Right cardiac atrium (tissue), 5 donors: ENCODE measurements at regions of chr18 and their contacts with region 1.

Region 1: GRCh38 chr18:60676815-60677214 is 304.2 kb upstream of the MC4R start:
- DNase-seq: no peak
- ATAC-seq: no peak
- H3K4me3 ChIP-seq: no peak overlapping the region
- H3K27ac ChIP-seq: no peak overlapping the region
- H3K4me1 ChIP-seq: no peaks in the 10 kb centered on the region
- H3K27me3 ChIP-seq: no peaks in the 10 kb centered on the region

Region 2: GRCh38 chr18:60391571-60392226 is 285.1 kb before region 1 on chr18:
- intact Hi-C with region 1: no loop called
- DNase-seq: no peak
- ATAC-seq: no peak
- H3K4me3 ChIP-seq: no peak overlapping the region
- H3K27ac ChIP-seq: no peak overlapping the region
- H3K4me1 ChIP-seq: no peaks in the 10 kb centered on the region
- H3K27me3 ChIP-seq: no peaks in the 10 kb centered on the region

Region 3: DNA sequence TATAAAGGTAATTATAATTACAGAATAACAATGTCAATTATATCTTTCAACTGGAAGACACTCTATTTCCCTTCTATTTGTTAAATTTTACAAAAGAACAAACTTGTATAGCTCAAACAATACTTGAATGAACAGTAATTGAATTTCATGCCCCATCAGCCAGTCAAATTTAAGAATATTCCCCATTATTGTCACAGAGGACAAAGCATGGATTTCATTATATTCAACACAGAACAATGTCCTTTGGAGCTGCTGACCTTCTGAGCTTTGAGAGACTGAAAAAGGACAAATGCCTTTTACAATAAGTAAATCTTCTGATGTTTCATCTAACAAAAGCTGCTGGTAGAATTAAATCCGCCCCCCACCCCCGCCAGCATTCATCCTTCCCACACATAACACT is 116.7 kb before region 1 on chr18:
- intact Hi-C with region 1: no loop called
- DNase-seq: no peak
- ATAC-seq: no peak
- H3K4me3 ChIP-seq: no peak overlapping the region
- H3K27ac ChIP-seq: no peak overlapping the region
- H3K4me1 ChIP-seq: no peaks in the 10 kb centered on the region
- H3K27me3 ChIP-seq: no peaks in the 10 kb centered on the region

Region 4: DNA sequence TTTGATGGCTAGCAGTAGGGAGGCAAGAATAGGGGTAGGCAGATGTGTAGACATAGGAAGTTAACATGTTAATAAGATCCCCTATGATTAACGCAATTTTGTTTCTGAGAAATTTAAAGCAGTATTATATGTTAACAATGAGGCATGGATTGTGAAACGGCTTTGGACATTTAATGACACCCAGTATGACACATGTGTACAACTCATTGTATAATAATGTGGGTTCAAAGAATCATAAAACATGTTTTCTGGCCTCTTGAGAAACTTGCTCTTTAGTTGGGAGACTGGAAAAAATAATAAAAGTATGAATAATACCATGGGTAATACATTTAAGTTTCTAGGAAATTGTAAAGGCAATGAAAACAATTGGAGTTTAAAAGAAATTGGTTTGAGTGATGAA is 324.3 kb after region 1 on chr18:
- intact Hi-C with region 1: loop called in 1 of 4 experiments (anchors 10 kb)
- DNase-seq: no peak
- ATAC-seq: no peak
- H3K4me3 ChIP-seq: no peak overlapping the region
- H3K27ac ChIP-seq: no peak overlapping the region
- H3K4me1 ChIP-seq: no peaks in the 10 kb centered on the region
- H3K27me3 ChIP-seq: no peaks in the 10 kb centered on the region